Activated CD4-positive, alpha-beta T cell treated with anti-CD3 and anti-CD28 coated beads, Interleukin-2, amount 10 ng/mL, durations not matched to agents 24 days and 14 days (primary cell): ENCODE measurements at regions of chr16 and their contacts with region 1.

Region 1: DNA sequence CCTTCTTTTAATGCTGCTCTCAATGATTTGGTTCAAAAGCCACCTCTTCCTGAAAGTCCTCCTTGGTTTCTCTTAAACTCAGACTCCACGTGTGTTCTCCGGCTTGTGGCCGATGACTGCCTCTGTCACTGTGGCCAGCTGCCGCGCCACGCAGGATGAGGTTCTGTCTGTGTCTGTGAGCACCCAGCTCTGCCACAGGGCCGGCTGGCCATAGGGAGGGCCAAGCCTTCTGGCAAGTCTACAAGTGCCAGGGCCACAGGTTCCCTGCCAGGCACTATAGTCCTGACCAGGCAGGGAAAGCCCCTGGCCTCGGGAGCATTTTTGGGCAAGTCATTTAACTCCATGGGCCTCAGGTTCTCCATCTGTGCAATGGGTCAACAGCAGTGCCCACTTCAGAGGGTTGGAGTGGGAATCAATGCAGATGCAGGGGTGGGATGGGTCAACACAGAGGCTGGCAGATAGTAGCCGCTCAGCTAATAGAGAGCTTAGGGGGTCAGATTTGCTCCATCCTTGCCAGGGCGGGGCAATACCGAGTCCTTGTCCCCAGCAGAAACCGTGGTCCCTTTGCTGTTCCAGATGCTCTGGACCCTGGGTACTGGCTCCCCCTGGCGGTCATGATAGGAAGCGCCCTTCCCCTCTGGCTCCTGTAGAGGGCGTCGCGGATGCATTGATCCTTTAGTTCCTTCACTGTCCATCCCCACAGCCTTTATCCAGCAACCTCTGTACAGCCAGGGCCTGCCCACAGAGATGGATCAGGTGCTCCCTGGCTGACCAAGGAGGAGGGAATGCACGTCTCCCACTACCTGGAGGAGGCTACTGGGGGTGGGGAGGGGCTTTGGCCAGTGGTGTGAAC is 19.3 kb upstream of the ADGRG3 start:
- DNase-seq: peak; percentile 96
- H3K4me3 Mint-ChIP-seq: no peak overlapping the region
- H3K27ac Mint-ChIP-seq: peak overlapping the region; percentile 63
- H3K4me1 Mint-ChIP-seq: peaks cover 31% of the 10 kb centered on the region
- H3K27me3 Mint-ChIP-seq: no peaks in the 10 kb centered on the region

Region 2: GRCh38 chr16:57591086-57591869 is 57.5 kb before region 1 on chr16:
- intact Hi-C with region 1: loop called (anchors 1 kb)
- DNase-seq: peak; percentile 90
- H3K4me3 Mint-ChIP-seq: peak overlapping the region; percentile 79
- H3K27ac Mint-ChIP-seq: peak overlapping the region; percentile 94
- H3K4me1 Mint-ChIP-seq: peaks cover 37% of the 10 kb centered on the region
- H3K27me3 Mint-ChIP-seq: no peaks in the 10 kb centered on the region

Region 3: GRCh38 chr16:57600048-57600835 is 48.6 kb before region 1 on chr16:
- intact Hi-C with region 1: loop called (anchors 2 kb)
- DNase-seq: peak; percentile 80
- H3K4me3 Mint-ChIP-seq: no peak overlapping the region
- H3K27ac Mint-ChIP-seq: peak overlapping the region; percentile 95
- H3K4me1 Mint-ChIP-seq: peaks cover 41% of the 10 kb centered on the region
- H3K27me3 Mint-ChIP-seq: peaks cover 3% of the 10 kb centered on the region

Region 4: GRCh38 chr16:57609541-57610401 is 39.0 kb before region 1 on chr16:
- intact Hi-C with region 1: loop called (anchors 1 kb)
- DNase-seq: peak; percentile 92
- H3K4me3 Mint-ChIP-seq: peak overlapping the region; percentile 71
- H3K27ac Mint-ChIP-seq: peak overlapping the region; percentile 98
- H3K4me1 Mint-ChIP-seq: peaks cover 45% of the 10 kb centered on the region
- H3K27me3 Mint-ChIP-seq: no peaks in the 10 kb centered on the region

Region 5: GRCh38 chr16:57628008-57628781 is 20.6 kb before region 1 on chr16 and contains the start of gene ADGRG1:
- intact Hi-C with region 1: loop called (anchors 1 kb)
- DNase-seq: peak; percentile 81
- H3K4me3 Mint-ChIP-seq: peak within 1 kb of the TSS; percentile 72
- H3K27ac Mint-ChIP-seq: peak within 1 kb of the TSS; percentile 75
- H3K4me1 Mint-ChIP-seq: peaks cover 16% of the 10 kb centered on the region
- H3K27me3 Mint-ChIP-seq: peaks cover 24% of the 10 kb centered on the region
- total RNA-seq, gene ADGRG1: 3.8 and 4.8 TPM in 2 replicates

Region 6: DNA sequence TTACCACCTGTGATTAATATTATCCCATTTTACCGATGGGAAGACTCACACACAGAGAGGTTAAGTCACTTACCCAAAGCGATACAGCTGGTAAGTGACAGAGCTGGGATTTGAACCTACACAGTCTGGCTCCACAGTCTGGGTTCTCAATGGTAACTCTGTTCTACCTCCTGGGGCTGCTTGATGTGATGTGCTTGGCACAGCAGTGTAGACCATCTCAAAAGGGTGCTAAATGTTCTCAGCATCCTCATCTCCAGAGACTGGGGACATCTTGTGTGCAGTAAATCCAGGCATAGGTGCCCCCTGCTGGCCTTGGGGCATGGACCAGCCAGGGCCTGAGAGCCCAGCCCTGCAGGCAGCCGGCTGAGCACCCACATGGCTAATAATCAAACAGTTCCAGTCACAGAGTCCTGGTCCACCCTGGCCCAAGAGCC is 71.3 kb after region 1 on chr16:
- intact Hi-C with region 1: loop called (anchors 2 kb)
- DNase-seq: peak; percentile 86
- H3K4me3 Mint-ChIP-seq: no peak overlapping the region
- H3K27ac Mint-ChIP-seq: no peak overlapping the region
- H3K4me1 Mint-ChIP-seq: no peaks in the 10 kb centered on the region
- H3K27me3 Mint-ChIP-seq: peaks cover 6% of the 10 kb centered on the region